Motor neuron (in vitro differentiated cells): ENCODE measurements at regions of chr4 and their contacts with region 1.

Region 1: GRCh38 chr4:121900132-121900983 is 30.1 kb upstream of the BBS7 start:
- ATAC-seq: peak in 6 of 8 experiments; percentile 50 to 81 (median 72)
- H3K4me3 ChIP-seq: no peak overlapping the region
- H3K27ac ChIP-seq: no peak overlapping the region
- H3K4me1 ChIP-seq: no peaks in the 10 kb centered on the region

Region 2: GRCh38 chr4:122542411-122543236 is 642.3 kb after region 1 on chr4:
- in situ Hi-C with region 1: loop called in 1 of 9 experiments (anchors 25 kb)
- ATAC-seq: peak in 2 of 8 experiments; percentile 23 to 42
- H3K4me3 ChIP-seq: no peak overlapping the region
- H3K27ac ChIP-seq: no peak overlapping the region
- H3K4me1 ChIP-seq: no peaks in the 10 kb centered on the region

Region 3: DNA sequence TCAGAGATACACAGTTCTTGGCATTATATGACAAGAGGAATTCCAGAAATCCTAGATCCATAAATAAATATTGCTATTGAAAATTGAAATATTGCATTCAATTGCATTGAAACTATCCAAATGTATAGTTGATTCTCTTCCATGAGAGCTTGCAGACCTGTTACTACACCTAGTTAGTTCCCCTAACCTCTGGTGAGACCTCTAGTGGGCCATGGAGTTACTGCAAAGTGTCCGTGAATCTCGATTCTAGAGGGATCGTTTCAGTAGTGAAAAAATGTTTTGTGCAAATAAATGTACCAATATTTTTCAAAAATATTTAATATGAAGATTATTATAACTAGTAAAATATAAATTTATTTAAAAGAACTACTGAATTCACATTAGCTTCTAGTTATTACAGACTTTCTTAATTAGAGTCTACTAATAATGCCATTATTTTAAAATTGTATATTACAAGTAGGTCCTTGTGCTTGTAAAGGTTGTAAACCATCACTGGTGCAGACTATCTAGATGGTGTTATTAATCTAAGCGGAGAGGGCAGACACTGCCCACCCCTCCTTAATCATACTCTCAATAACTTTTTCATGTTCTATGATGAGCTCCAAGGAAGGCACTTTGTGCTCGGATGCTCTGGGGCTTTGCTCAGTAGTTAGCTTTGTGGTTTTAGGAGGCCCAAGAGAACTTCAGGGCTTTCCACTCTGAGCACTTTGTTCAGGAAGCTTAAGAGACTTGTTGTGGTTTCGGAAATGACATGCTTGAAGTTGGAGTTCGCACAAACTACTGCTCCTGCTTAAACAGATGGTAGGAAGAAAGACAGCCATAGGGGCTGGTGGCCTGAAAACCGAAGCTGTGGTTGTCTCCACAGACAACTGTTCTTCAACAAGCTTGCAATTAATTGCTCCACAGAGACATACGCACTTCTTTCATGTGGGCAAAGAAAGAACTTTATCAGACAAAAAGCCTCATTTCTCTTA is 677.7 kb after region 1 on chr4:
- in situ Hi-C with region 1: loop called in 1 of 9 experiments (anchors 25 kb)
- ATAC-seq: peak in 1 of 8 experiments; percentile 59
- H3K4me3 ChIP-seq: no peak overlapping the region
- H3K27ac ChIP-seq: no peak overlapping the region
- H3K4me1 ChIP-seq: no peaks in the 10 kb centered on the region